AG04449 (cell line): ENCODE measurements at regions of chr5 and their contacts with region 1.

Region 1: GRCh38 chr5:88729084-88729828 is 153.7 kb downstream of the MEF2C start:
- DNase-seq: peak; percentile 14
- H3K4me3 ChIP-seq: no peak overlapping the region
- CTCF ChIP-seq: peak; percentile 30

Region 2: DNA sequence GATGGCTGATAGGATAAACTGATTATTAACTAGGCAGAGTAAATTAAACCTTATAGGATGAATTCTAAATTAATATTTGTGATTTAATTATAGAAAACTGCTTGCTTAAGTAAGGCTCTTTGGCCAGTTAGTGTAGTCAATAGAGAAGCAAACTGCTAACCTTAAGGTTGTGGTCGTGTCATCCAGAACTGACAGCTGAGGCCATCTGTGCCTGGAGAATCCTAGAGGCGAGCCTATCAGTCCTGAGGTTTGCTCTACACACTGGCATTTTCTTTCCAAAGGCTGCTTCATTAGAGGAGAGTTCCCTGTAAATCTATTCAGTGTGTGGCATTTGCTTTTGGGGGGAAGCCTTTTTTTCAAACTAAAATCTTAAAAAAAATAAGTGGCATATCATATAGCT is 15.4 kb before region 1 on chr5:
- CTCF ChIA-PET with region 1: interaction called, 20 read pairs
- POLR2A ChIA-PET with region 1: no interaction called
- DNase-seq: no peak
- H3K4me3 ChIP-seq: no peak overlapping the region
- CTCF ChIP-seq: no peak

Region 3: DNA sequence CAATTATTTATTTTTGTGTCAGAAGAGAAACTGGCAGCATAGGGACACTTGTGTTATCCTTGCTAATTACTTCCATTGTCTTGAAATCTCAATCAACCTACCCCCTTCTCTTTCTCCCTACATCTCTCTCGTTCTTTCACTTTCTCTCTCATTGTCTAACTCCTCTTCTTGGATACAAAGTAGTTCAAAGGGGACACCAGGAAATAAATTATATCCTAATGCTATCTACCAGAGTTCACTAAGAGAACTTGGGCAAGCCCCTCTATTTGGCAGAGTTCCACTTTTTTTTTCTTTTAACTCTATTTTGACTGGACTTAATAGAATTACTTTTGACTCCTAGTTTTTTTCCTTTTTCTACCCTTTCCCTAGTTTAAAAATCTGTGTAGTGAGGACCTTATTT is 51.5 kb after region 1 on chr5:
- CTCF ChIA-PET with region 1: no interaction called
- POLR2A ChIA-PET with region 1: no interaction called
- DNase-seq: no peak
- H3K4me3 ChIP-seq: no peak overlapping the region
- CTCF ChIP-seq: no peak

Region 4: DNA sequence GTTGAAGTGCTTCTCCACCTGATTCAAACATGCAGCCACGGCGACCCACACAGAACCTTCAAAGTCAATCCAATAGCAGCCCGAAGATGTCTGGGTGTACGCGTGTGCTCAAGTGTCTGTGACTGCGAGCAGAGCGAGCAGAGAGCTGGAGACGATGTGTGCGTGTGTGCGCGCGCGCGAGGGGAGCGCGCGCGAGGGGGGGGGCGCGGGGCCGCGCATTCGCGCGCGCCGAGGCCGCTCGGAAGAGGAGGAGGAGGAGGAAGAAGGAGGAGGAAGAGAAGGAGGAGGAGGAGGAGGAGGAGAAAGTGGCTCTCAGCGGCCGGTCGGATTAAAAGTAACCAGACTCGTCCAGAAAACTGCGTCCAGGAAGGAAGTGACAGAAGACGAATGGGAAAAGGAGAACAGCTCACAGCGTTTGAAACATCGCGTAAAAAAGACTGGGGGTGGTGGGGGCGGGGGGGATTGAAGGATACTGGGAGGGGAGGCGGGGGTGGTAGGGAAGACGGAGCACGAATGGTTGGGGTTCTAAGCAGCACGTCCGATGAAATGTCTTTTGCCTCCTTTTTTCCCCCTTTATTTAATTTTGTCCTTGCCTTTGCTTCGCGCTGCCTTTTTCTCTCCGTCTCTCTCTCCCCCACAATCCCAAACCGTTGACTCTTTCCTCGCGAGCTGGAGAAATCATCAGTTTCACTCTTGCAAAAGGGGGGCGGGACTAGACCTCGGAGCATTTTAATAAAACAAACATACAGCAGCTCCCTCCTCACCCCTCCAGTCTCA is 154.0 kb after region 1 on chr5 and contains the start of gene MEF2C:
- CTCF ChIA-PET with region 1: interaction called, 41 read pairs
- POLR2A ChIA-PET with region 1: no interaction called
- DNase-seq: no peak
- H3K4me3 ChIP-seq: peak within 1 kb of the TSS; percentile 68
- CTCF ChIP-seq: no peak

Region 5: DNA sequence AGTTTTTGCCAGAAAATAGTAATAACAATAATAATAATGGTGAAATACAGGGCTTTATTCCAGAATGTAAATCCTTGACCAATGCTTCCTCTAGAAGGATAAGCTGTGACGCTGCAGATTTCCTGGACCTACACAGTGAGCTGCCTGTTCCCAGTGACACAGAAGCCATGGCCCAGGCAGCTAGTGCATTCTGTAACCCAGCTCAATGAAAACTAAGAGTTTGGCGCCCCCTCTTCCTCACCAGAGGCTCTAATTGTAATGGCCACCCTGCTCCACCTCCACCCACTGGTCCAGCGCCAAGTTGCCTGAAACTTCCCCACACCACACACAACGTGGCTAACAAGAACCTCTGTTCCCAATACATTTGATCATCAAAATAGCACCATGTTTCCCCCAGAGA is 1432.2 kb after region 1 on chr5:
- CTCF ChIA-PET with region 1: interaction called, 17 read pairs
- POLR2A ChIA-PET with region 1: no interaction called
- DNase-seq: no peak
- H3K4me3 ChIP-seq: no peak overlapping the region
- CTCF ChIP-seq: peak; percentile 19

Region 6: GRCh38 chr5:90386099-90386710 is 1656.9 kb after region 1 on chr5:
- CTCF ChIA-PET with region 1: interaction called, 23 read pairs
- POLR2A ChIA-PET with region 1: no interaction called
- DNase-seq: no peak
- H3K4me3 ChIP-seq: no peak overlapping the region
- CTCF ChIP-seq: peak; percentile 14